A673 (cell line): ENCODE measurements at regions of chr22 and their contacts with region 1.

Region 1: DNA sequence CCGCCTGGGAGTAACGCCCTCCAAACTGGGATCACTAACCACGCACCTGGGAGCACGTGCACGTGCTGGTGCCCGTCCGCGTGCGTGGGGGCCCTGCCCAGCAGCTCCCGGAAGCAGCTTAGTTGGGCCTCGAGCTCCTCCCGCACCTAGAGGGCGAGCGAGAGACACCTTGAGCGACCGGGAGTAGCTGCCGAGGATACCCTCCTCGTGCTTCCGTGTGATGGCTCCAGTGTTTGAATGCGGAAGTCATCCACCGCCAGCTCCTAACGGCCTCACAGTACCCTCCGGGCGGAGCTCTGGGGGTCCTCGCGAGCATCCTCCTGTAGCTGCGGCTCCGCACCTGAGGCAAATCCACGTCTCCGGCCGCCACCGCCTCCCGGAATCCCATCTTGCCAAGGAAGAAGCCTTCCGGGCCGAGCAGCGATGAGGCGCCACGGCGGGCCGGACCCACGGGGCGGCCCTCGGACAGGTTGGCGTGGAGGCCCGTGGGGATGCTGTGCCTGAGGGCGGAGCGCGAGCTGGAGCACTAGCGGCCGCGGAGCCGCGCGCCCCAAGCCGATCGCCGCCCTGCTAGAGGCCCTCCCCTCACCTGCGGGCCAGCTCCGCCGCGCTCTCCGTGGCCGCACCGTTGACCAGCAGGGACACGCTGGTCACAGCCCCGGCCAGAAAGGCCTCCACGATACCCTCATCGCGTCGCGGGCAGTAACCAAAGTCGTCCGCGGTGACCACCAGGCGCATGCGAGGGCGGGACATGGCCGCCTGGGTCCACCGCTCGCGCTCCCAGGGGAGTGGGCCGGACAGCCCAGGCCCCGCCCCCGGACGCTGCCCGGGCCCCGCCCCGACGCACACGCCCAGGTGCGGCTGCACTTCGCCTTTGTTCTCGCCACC is at the start of gene YDJC:
- DNase-seq: peak; percentile 94
- H3K4me3 ChIP-seq: peak within 1 kb of the TSS; percentile 60
- H3K27ac ChIP-seq: peak within 1 kb of the TSS; percentile 67
- H3K4me1 ChIP-seq: peaks cover 9% of the 10 kb centered on the region
- H3K27me3 ChIP-seq: no peaks in the 10 kb centered on the region
- CTCF ChIP-seq: peak; percentile 66
- total RNA-seq, gene YDJC: 33.8 and 37.0 TPM in 2 replicates

Region 2: GRCh38 chr22:20642668-20643179 is 986.8 kb before region 1 on chr22:
- CTCF ChIA-PET with region 1: no interaction called
- POLR2A ChIA-PET with region 1: interaction called, 10 read pairs
- intact Hi-C with region 1: no loop called
- DNase-seq: no peak
- H3K4me3 ChIP-seq: no peak overlapping the region
- H3K27ac ChIP-seq: no peak overlapping the region
- H3K4me1 ChIP-seq: no peaks in the 10 kb centered on the region
- H3K27me3 ChIP-seq: no peaks in the 10 kb centered on the region
- CTCF ChIP-seq: no peak

Region 3: DNA sequence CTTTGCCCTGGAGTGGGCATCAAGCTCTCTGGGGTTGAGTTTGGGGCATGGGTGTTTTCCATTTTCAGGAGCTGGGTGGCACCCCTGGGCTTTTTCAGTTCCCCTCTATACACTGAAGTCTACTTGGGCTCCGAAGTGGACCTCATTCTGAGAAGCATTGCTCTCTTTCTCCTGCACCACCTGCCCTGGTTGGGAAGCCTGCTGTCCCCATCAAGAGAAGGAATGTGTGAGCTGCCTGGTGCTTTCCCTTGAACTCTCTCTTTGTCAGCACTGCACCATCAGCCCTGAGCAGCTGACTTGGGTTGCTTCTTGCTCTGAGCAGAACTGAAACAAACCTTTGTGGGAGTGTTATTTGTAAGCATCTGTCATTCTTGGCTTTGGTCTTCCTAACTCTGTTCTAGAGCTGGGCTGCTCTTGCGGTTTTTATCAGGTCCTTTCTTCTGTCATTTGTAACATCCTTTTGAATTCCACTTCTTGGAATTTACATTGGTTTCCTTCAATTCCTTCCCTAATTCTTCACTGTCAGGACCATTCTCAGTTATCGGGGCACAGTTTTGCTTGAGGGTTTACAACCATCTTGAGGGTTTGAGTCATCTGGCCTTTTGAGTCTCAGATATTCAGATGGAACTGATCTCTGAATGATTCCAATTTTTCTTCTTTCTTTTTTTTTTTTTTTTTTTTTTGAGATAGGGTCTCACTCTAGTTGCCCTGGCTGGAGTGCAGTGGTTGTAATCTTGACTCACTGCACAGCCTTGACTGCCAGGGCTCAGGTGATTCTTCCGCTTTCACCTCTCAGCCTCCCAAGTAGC is 41.5 kb before region 1 on chr22:
- CTCF ChIA-PET with region 1: no interaction called
- POLR2A ChIA-PET with region 1: no interaction called
- intact Hi-C with region 1: loop called (anchors 5 kb)
- DNase-seq: no peak
- H3K4me3 ChIP-seq: no peak overlapping the region
- H3K27ac ChIP-seq: no peak overlapping the region
- H3K4me1 ChIP-seq: no peaks in the 10 kb centered on the region
- H3K27me3 ChIP-seq: no peaks in the 10 kb centered on the region
- CTCF ChIP-seq: no peak

Region 4: GRCh38 chr22:21741806-21742205 is 112.3 kb after region 1 on chr22:
- CTCF ChIA-PET with region 1: no interaction called
- POLR2A ChIA-PET with region 1: no interaction called
- intact Hi-C with region 1: no loop called
- DNase-seq: no peak
- H3K4me3 ChIP-seq: no peak overlapping the region
- H3K27ac ChIP-seq: no peak overlapping the region
- H3K4me1 ChIP-seq: no peaks in the 10 kb centered on the region
- H3K27me3 ChIP-seq: no peaks in the 10 kb centered on the region
- CTCF ChIP-seq: no peak

Region 5: DNA sequence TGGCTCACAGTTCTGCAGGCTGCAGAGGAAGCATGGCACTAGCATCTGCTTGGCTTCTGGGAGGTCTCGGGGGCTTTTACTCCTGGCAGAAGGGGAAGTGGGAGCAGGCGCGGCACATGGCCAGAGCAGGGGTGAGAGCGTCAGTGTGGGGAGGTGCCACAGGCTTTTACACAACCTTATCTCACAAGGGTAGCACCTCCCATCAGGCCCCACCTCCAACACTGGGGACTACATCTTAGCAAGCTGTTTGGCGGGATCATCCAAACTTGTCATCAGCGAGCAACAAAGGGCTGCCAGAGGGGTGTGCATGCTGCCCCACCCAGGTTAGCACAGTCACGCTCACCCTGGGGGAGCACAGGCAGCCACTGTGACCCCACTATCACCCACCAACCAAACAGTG is 125.0 kb after region 1 on chr22:
- CTCF ChIA-PET with region 1: no interaction called
- POLR2A ChIA-PET with region 1: no interaction called
- intact Hi-C with region 1: no loop called
- DNase-seq: no peak
- H3K4me3 ChIP-seq: no peak overlapping the region
- H3K27ac ChIP-seq: no peak overlapping the region
- H3K4me1 ChIP-seq: peaks cover 10% of the 10 kb centered on the region
- H3K27me3 ChIP-seq: no peaks in the 10 kb centered on the region
- CTCF ChIP-seq: no peak

Region 6: DNA sequence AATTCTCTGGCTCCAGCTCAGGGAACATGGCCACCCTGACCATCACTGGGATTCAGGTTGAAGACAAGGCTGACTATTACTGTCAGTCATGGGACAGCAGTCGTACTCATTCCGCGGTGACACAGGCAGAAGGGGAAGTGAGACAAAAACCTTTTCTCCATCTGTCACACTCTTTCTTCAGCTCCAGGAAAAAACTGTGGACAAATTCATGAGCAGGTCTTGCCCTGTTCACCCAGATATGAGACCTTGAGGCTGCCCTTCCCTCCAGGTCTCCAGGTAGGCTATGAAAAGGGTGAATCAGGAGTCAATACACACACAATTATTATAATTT is 975.5 kb after region 1 on chr22:
- CTCF ChIA-PET with region 1: no interaction called
- POLR2A ChIA-PET with region 1: no interaction called
- intact Hi-C with region 1: no loop called
- DNase-seq: no peak
- H3K4me3 ChIP-seq: no peak overlapping the region
- H3K27ac ChIP-seq: no peak overlapping the region
- H3K4me1 ChIP-seq: no peaks in the 10 kb centered on the region
- H3K27me3 ChIP-seq: no peaks in the 10 kb centered on the region
- CTCF ChIP-seq: no peak